ENCODE measurements at regions of chr4 and their contacts with region 1.

Region 1: GRCh38 chr4:124262211-124263179 is 450.0 kb downstream of the ANKRD50 start:
- DNase-seq: peak; percentile 88
- ATAC-seq: peak; percentile 97
- H3K4me3 ChIP-seq: no peak overlapping the region
- H3K27ac ChIP-seq: no peak overlapping the region
- H3K4me1 ChIP-seq: no peaks in the 10 kb centered on the region
- H3K27me3 ChIP-seq: no peaks in the 10 kb centered on the region
- CTCF ChIP-seq: peak; percentile 91
- POLR2A ChIP-seq: no peak
- RAD21 ChIP-seq: peak; percentile 96

Region 2: DNA sequence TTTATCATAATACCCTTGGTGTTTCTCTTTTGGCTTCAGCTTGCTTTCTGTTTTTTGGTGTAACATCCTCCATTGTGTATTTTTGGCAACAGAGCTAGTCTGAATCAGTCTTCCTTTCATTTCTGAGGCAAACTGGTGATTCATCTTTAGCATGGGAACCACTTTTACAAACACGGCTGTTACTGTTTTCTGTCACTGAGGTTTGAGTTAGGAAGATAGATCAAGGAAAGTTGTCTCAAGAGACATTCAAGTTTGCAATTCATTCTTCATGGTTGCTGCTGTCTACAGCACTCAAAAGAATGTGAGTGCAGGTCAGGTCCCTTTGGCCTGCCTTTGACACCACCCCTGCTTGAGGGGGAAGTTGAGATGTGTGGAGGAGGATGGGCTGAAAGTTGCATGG is 1678.0 kb before region 1 on chr4:
- CTCF ChIA-PET with region 1: no interaction called
- POLR2A ChIA-PET with region 1: no interaction called
- dilution Hi-C with region 1: no loop called
- in situ Hi-C with region 1: no loop called
- intact Hi-C with region 1: loop called (anchors 10 kb)
- DNase-seq: peak; percentile 82
- ATAC-seq: peak; percentile 53
- H3K4me3 ChIP-seq: no peak overlapping the region
- H3K27ac ChIP-seq: no peak overlapping the region
- H3K4me1 ChIP-seq: peaks cover 10% of the 10 kb centered on the region
- H3K27me3 ChIP-seq: no peaks in the 10 kb centered on the region
- CTCF ChIP-seq: no peak
- POLR2A ChIP-seq: no peak
- RAD21 ChIP-seq: no peak

Region 3: DNA sequence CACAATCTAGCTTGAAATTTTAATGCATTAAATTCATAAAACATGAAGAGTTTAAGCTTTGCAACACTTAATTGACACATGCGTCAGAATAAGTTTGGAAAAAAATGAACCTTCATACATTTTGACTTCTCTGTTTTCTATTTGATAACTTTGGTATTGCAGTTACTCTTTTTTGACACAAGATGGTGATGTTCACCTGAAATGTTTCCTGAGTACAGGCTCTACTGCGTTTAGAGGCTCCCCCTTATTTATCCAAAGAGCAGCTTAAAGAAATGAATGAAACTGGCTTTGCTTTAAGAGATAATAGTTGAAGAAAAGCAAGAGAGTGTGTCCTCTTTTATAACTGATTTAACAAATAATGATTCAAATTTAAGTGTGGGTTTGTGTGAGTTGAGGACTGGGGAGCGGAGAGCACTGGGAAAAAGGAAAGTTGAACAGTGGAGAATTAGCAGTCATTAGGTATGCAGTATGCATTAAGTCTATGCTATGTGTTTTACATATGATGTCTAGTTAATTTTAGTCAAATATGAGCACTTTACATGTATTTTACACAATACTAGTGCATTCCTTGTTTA is 1159.5 kb before region 1 on chr4:
- CTCF ChIA-PET with region 1: no interaction called
- POLR2A ChIA-PET with region 1: no interaction called
- dilution Hi-C with region 1: no loop called
- in situ Hi-C with region 1: loop called (anchors 10 kb)
- intact Hi-C with region 1: loop called (anchors 2 kb)
- DNase-seq: peak; percentile 69
- ATAC-seq: peak; percentile 89
- H3K4me3 ChIP-seq: no peak overlapping the region
- H3K27ac ChIP-seq: no peak overlapping the region
- H3K4me1 ChIP-seq: no peaks in the 10 kb centered on the region
- H3K27me3 ChIP-seq: no peaks in the 10 kb centered on the region
- CTCF ChIP-seq: peak; percentile 71
- POLR2A ChIP-seq: no peak
- RAD21 ChIP-seq: peak; percentile 81

Region 4: GRCh38 chr4:123127218-123127617 is 1135.3 kb before region 1 on chr4:
- CTCF ChIA-PET with region 1: interaction called, 3 read pairs
- POLR2A ChIA-PET with region 1: no interaction called
- dilution Hi-C with region 1: no loop called
- in situ Hi-C with region 1: no loop called
- intact Hi-C with region 1: loop called (anchors 1 kb)
- DNase-seq: peak; percentile 42
- ATAC-seq: peak; percentile 83
- H3K4me3 ChIP-seq: no peak overlapping the region
- H3K27ac ChIP-seq: no peak overlapping the region
- H3K4me1 ChIP-seq: no peaks in the 10 kb centered on the region
- H3K27me3 ChIP-seq: no peaks in the 10 kb centered on the region
- CTCF ChIP-seq: peak; percentile 56
- POLR2A ChIP-seq: no peak
- RAD21 ChIP-seq: peak; percentile 61

Region 5: DNA sequence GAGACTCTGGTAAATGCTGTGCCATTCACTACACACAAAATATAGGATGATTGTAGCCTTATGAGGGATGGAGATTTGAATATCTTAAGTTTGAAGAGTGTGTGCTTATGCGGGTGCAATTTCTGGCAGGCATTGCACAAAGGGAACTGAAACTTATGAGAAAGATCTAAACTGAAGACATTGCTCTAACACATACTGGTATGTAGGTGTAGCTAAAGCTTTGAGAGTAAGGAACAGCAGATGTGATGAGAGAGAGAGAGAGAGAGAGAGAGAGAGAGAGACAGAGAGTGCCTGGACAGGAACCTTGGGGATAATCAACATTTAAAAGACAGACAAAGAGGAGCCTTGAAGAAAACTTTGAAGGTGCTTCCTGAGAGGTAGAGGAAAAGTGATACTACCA is 486.2 kb before region 1 on chr4:
- CTCF ChIA-PET with region 1: no interaction called
- POLR2A ChIA-PET with region 1: no interaction called
- dilution Hi-C with region 1: no loop called
- in situ Hi-C with region 1: loop called (anchors 10 kb)
- intact Hi-C with region 1: loop called (anchors 2 kb)
- DNase-seq: no peak
- ATAC-seq: no peak
- H3K4me3 ChIP-seq: no peak overlapping the region
- H3K27ac ChIP-seq: no peak overlapping the region
- H3K4me1 ChIP-seq: peaks cover 4% of the 10 kb centered on the region; the same call in 1 of the 2 replicates
- H3K27me3 ChIP-seq: no peaks in the 10 kb centered on the region
- CTCF ChIP-seq: no peak
- POLR2A ChIP-seq: no peak
- RAD21 ChIP-seq: no peak

Region 6: GRCh38 chr4:123832173-123833026 is 430.1 kb before region 1 on chr4:
- CTCF ChIA-PET with region 1: no interaction called
- POLR2A ChIA-PET with region 1: no interaction called
- dilution Hi-C with region 1: no loop called
- in situ Hi-C with region 1: no loop called
- intact Hi-C with region 1: loop called (anchors 10 kb)
- DNase-seq: peak; percentile 100
- ATAC-seq: peak; percentile 84
- H3K4me3 ChIP-seq: no peak overlapping the region
- H3K27ac ChIP-seq: peak overlapping the region; percentile 83
- H3K4me1 ChIP-seq: peaks cover 14% of the 10 kb centered on the region
- H3K27me3 ChIP-seq: no peaks in the 10 kb centered on the region
- CTCF ChIP-seq: no peak
- POLR2A ChIP-seq: no peak
- RAD21 ChIP-seq: no peak

Region 7: GRCh38 chr4:124936427-124936826 is 673.9 kb after region 1 on chr4:
- CTCF ChIA-PET with region 1: no interaction called
- POLR2A ChIA-PET with region 1: no interaction called
- dilution Hi-C with region 1: no loop called
- in situ Hi-C with region 1: no loop called
- intact Hi-C with region 1: no loop called
- DNase-seq: peak; percentile 60
- ATAC-seq: peak; percentile 70
- H3K4me3 ChIP-seq: no peak overlapping the region
- H3K27ac ChIP-seq: no peak overlapping the region
- H3K4me1 ChIP-seq: peaks cover 3% of the 10 kb centered on the region
- H3K27me3 ChIP-seq: no peaks in the 10 kb centered on the region
- CTCF ChIP-seq: no peak
- POLR2A ChIP-seq: no peak
- RAD21 ChIP-seq: no peak

Measured in IMR-90 (cell line).